ENCODE measurements at regions of chr6 and their contacts with region 1.

Region 1: DNA sequence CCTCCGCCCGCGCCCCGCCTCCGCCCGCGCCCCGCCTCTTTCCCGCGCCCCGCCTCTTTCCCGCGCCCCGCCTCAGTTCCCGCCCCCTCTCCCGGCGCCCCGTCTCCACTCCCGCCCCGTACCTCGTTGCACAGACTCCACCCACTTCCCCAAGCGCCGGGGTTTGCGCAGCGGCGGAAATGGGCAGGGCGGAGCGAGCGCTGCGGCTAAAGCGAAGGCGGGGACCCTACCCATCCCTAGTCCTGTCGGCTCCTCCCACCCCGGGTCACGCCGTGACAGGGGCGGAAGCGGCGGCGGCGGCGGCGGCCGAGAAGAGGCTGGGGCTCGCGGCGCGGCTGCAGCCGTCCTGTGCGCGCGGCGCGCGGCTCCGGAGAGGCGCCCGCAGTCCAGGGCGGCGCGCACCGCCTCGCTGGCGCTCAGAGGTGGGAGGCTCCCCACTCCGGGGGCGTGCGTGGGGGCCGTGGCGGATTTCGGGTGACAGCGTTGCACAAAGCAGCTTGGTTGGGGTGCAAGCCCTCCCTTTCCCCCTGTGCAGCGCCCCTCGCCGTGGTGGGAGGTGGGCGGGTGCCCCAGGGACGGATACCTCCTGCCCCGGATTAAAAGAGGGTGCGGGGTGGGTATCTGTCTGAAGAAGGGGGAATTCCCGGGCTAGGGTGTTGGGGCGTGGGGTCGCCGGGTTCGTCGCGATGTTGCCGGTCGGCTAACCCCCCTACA is at the start of gene KDM1B:
- DNase-seq: peak; percentile 94 to 100 (median 99)

Region 2: GRCh38 chr6:18264219-18264922 is 109.1 kb after region 1 on chr6 and contains the start of gene DEK:
- intact Hi-C with region 1: loop called (anchors 2 kb)
- DNase-seq: peak; percentile 71 to 95 (median 89)

Measured in head of caudate nucleus (tissue), 42 donors.